GM18951 (cell line): ENCODE measurements at regions of chr7 and their contacts with region 1.

Region 1: DNA sequence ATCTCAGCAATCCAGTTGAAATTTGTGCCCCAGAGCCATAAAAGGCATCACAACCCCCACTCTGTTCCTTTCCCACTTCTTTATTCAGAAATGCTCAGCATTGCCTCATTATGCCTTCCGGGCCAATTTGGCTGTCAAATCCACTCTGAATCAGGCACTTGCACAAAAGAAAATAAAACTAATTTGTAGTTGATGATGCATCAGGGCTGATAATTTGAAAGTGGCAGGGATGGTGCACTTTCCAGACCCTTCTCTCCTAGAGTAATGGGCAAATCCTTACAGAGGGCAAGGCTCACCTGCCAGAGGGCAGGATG is 147.9 kb upstream of the PDE1C start:
- POLR2A ChIP-seq: no peak

Region 2: GRCh38 chr7:32347244-32347828 is 129.2 kb after region 1 on chr7:
- in situ Hi-C with region 1: loop called (anchors 10 kb)
- POLR2A ChIP-seq: no peak